Tibial artery (tissue), 4 donors: ENCODE measurements at regions of chr2 and their contacts with region 1.

Region 1: DNA sequence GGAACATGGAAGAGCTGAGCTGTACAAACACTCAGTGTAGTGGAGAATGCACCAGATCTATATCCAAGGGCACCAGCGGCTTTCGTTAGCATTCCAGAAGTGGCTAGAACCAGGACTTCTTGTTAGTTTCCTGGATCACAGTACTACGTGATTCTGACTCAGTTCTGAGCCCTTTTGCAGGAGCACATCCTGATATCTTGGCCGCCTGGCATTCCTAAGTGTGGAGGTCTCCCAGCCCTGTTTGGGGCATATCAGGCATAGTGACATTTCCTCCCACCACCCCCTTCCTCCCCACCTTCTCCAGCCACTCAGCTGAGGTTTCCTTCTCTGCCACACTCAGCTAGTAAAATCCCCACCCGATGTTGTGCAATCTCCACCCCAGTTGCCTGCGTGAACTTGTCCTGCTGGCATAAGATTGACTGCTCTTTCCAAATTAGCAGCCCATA is 63.4 kb downstream of the BMP10 start:
- DNase-seq: peak; percentile 69 to 74
- H3K4me3 ChIP-seq: no peak overlapping the region
- H3K27ac ChIP-seq: peak overlapping the region in 1 of 2 donors; percentile 19
- H3K4me1 ChIP-seq: peaks cover 0 to 33% (median 16%) of the 10 kb centered on the region in 4 donors
- H3K27me3 ChIP-seq: no peaks in the 10 kb centered on the region
- CTCF ChIP-seq: no peak

Region 2: DNA sequence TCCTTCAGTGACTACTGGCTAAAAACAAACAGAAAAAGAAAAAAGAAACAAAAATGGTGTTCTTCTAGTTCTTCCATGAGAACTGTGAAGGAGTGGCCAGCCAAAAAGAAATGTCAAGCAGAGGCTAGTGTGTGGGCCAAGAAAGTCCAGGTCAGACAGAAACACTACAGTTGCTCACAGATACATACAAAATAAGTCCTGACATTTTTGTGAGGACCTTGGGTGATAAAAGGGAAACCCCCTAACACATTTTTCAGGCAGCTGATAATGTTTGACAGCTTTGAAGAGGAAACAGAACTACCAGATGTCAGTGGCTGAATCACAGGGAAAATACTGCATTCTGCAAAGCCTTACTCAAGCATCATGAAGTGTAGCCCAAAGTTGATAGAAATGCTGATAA is 45.2 kb before region 1 on chr2:
- intact Hi-C with region 1: loop called (anchors 5 kb)
- DNase-seq: no peak
- H3K4me3 ChIP-seq: no peak overlapping the region
- H3K27ac ChIP-seq: no peak overlapping the region
- H3K4me1 ChIP-seq: peaks cover 0 to 21% (median 0%) of the 10 kb centered on the region in 4 donors
- H3K27me3 ChIP-seq: no peaks in the 10 kb centered on the region
- CTCF ChIP-seq: no peak